Naive thymus-derived CD4-positive, alpha-beta T cell (primary cell): ENCODE measurements at regions of chr19 and their contacts with region 1.

Region 1: DNA sequence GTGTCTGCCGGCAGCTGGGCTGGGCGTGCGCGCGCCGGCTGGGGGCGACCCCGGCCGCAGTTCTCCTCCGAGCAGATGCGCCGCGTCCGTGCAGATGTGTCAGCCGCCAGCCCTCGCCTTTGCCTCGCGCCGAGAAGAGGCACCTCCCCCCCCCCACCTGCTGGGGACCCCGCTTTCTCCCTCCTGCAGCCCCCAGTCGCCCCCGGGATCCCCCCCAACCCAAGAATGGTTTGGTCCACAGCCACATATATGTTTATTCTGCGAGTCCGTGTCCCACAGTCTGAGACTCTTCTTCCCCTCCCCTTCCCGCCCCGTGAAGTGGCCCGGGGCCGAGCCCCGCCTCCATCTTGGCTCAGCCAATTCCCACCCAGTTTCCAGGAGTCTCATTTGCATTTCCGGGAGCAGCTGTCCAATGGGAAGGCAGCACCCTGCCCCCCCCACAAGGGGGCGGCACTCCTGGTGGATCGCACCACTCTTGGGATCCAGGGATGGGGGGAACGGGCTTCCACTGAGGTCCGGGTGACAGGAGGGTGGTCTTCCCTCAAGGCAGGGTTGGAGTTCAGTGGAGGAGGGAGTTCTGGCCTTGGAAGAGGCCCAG is 8.6 kb downstream of the ISOC2 start:
- DNase-seq: peak in 3 of 9 donors; percentile 25 to 48 (median 25)
- ATAC-seq: peak; percentile 73
- H3K4me3 ChIP-seq: no peak overlapping the region
- H3K4me3 Mint-ChIP-seq: peak overlapping the region in 6 of 10 donors; percentile 44 to 82 (median 64)
- H3K27ac ChIP-seq: no peak overlapping the region
- H3K27ac Mint-ChIP-seq: peak overlapping the region in 1 of 9 donors; percentile 9
- H3K4me1 ChIP-seq: peaks cover 0 to 17% of the 10 kb centered on the region in 2 donors
- H3K4me1 Mint-ChIP-seq: peaks cover 7 to 21% (median 15%) of the 10 kb centered on the region in 7 donors
- H3K27me3 ChIP-seq: peaks cover 3 to 22% of the 10 kb centered on the region in 2 donors
- H3K27me3 Mint-ChIP-seq: peaks cover 8 to 33% (median 19%) of the 10 kb centered on the region in 5 donors

Region 2: DNA sequence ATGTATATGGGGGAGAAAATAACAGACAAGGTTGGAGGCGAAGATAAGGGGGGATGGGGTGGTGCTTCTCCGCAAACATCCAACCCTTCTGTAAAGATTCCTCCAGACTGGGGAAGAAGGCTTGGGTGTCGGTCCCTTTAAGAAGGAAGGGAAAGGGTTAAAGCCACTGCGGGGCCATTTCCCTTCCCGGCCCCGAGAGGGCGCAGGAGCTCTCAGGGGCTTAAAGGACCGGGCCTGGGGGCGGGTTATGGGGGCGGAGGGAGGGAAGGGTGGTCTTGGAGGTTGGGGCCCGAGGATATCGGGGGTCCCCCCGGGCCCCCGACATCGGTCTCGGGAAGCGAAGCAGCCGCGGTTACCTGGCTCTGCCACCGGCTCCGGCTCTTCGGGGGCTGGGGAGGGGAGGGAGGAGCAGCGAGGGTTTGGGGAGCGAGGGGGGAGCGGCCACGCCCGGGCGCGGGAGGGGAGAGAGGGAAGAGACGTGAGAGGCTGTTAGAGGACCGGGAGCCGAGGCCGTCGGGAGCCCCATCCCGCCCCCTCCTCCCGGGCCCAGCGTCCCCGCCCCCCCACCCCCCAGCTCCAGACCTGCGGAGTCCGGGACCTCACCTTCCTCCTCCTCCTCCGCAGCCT is 306.7 kb before region 1 on chr19:
- CTCF ChIA-PET with region 1: interaction called, 4 read pairs
- POLR2A ChIA-PET with region 1: no interaction called
- intact Hi-C with region 1: loop called in 1 of 2 experiments (anchors 2 kb)
- DNase-seq: no peak
- ATAC-seq: no peak
- H3K4me3 ChIP-seq: no peak overlapping the region
- H3K4me3 Mint-ChIP-seq: peak overlapping the region in 1 of 10 donors; percentile 28
- H3K27ac ChIP-seq: no peak overlapping the region
- H3K27ac Mint-ChIP-seq: no peak overlapping the region
- H3K4me1 ChIP-seq: no peaks in the 10 kb centered on the region
- H3K4me1 Mint-ChIP-seq: peaks cover under 1 to 14% (median 8%) of the 10 kb centered on the region in 7 donors
- H3K27me3 ChIP-seq: peaks cover 10 to 11% of the 10 kb centered on the region in 2 donors
- H3K27me3 Mint-ChIP-seq: peaks cover 49 to 65% (median 52%) of the 10 kb centered on the region in 5 donors

Region 3: DNA sequence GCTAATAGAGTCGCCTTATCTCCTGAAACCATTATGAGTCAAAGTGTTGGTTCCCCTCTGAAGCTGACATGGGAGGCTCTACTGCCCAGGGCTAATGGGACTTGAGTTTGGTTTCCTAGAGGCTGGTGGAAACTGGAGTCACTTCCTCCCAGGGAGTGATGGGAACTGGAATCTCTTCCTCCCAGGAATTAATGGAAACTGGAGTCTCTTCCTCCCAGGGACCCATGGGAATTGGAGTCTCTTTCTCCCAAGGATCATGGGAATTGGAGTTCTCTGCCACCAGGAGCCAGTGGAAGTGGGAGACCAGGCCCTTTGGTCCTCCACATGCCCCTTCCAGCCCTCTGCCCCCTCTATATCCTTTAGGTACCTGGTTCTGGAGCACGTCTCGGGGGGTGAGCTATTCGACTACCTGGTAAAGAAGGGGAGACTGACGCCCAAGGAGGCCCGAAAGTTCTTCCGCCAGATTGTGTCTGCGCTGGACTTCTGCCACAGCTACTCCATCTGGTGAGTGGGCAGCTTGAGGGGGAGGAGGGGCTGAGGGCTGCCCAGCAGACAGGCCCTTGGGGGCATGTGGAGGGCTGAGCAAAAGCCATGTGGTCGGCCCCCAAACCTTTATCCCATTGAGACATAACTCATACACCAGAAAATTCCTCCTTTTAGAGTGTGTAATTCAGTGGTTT is 163.6 kb before region 1 on chr19:
- CTCF ChIA-PET with region 1: no interaction called
- POLR2A ChIA-PET with region 1: no interaction called
- intact Hi-C with region 1: loop called in 1 of 2 experiments (anchors 1 kb)
- DNase-seq: no peak
- ATAC-seq: no peak
- H3K4me3 ChIP-seq: no peak overlapping the region
- H3K4me3 Mint-ChIP-seq: no peak overlapping the region
- H3K27ac ChIP-seq: no peak overlapping the region
- H3K27ac Mint-ChIP-seq: no peak overlapping the region
- H3K4me1 ChIP-seq: no peaks in the 10 kb centered on the region
- H3K4me1 Mint-ChIP-seq: peaks cover 0 to 9% (median 5%) of the 10 kb centered on the region in 7 donors
- H3K27me3 ChIP-seq: no peaks in the 10 kb centered on the region
- H3K27me3 Mint-ChIP-seq: no peaks in the 10 kb centered on the region

Region 4: GRCh38 chr19:55301459-55302317 is 151.2 kb before region 1 on chr19:
- CTCF ChIA-PET with region 1: no interaction called
- POLR2A ChIA-PET with region 1: no interaction called
- intact Hi-C with region 1: loop called in 1 of 2 experiments (anchors 1 kb)
- DNase-seq: peak; percentile 84 to 97 (median 91)
- ATAC-seq: peak; percentile 97
- H3K4me3 ChIP-seq: peak overlapping the region; percentile 61
- H3K4me3 Mint-ChIP-seq: peak overlapping the region; percentile 77 to 97 (median 88)
- H3K27ac ChIP-seq: peak overlapping the region; percentile 66
- H3K27ac Mint-ChIP-seq: peak overlapping the region; percentile 66 to 95 (median 84)
- H3K4me1 ChIP-seq: peaks cover 5 to 10% of the 10 kb centered on the region in 2 donors
- H3K4me1 Mint-ChIP-seq: peaks cover 0 to 17% (median 11%) of the 10 kb centered on the region in 7 donors
- H3K27me3 ChIP-seq: no peaks in the 10 kb centered on the region
- H3K27me3 Mint-ChIP-seq: peaks cover 0 to 3% (median 0%) of the 10 kb centered on the region in 5 donors

Region 5: GRCh38 chr19:55703790-55704215 is 251.0 kb after region 1 on chr19:
- CTCF ChIA-PET with region 1: no interaction called
- POLR2A ChIA-PET with region 1: no interaction called
- intact Hi-C with region 1: no loop called
- DNase-seq: peak in 6 of 9 donors; percentile 4 to 70 (median 26)
- ATAC-seq: peak; percentile 61
- H3K4me3 ChIP-seq: no peak overlapping the region
- H3K4me3 Mint-ChIP-seq: no peak overlapping the region
- H3K27ac ChIP-seq: no peak overlapping the region
- H3K27ac Mint-ChIP-seq: peak overlapping the region in 1 of 9 donors; percentile 10
- H3K4me1 ChIP-seq: no peaks in the 10 kb centered on the region
- H3K4me1 Mint-ChIP-seq: peaks cover 0 to 7% (median 4%) of the 10 kb centered on the region in 7 donors
- H3K27me3 ChIP-seq: no peaks in the 10 kb centered on the region
- H3K27me3 Mint-ChIP-seq: no peaks in the 10 kb centered on the region